Vagina (tissue), 2 donors: ENCODE measurements at regions of chr10 and their contacts with region 1.

Region 1: GRCh38 chr10:23994479-23995046 is 214.4 kb upstream of the KIAA1217 start:
- DNase-seq: no peak
- H3K4me3 ChIP-seq: no peak overlapping the region
- H3K27ac ChIP-seq: no peak overlapping the region
- H3K4me1 ChIP-seq: no peaks in the 10 kb centered on the region
- H3K27me3 ChIP-seq: no peaks in the 10 kb centered on the region
- CTCF ChIP-seq: peak; percentile 61 to 68 (median 65)
- POLR2A ChIP-seq: no peak

Region 2: DNA sequence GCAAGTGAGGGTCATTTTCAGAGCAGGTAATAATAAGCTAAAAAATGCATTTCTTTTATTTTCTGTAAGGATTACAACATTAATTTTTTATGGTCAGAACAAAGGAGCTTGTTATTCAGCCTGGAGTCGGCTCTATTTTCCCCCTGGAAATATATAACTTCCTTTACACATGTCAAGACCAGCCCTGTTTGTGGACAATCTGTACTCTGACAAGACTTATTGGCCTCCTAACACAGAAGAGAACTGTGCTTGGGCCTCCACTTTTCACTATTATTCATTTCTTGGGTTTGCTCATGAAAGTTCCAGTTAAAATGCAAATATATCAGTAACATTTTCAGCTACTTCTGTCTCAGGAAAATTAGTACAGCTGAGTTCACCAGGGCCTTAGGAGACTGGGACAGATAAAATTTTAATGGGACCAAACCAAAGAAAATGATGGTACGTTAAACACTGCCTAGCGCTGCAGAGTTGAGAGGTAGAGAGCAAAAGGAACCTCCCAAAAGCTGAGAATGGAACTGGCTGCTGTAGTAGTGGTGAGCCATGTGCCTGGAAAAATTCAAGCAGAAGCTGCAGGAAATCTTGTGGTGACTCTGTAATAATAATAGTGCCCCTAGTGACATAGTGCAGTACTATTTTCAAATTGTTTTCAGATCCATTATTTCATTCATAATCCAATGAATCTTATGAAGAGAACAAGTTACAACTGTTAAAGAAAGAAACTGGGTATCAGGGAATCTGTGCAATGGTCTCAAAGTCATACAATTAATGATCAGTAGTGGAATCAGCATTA is 12.8 kb before region 1 on chr10:
- intact Hi-C with region 1: no loop called
- DNase-seq: no peak
- H3K4me3 ChIP-seq: no peak overlapping the region
- H3K27ac ChIP-seq: no peak overlapping the region
- H3K4me1 ChIP-seq: no peaks in the 10 kb centered on the region
- H3K27me3 ChIP-seq: no peaks in the 10 kb centered on the region
- CTCF ChIP-seq: no peak
- POLR2A ChIP-seq: no peak

Region 3: GRCh38 chr10:24008164-24009091 is 13.9 kb after region 1 on chr10:
- intact Hi-C with region 1: no loop called
- DNase-seq: no peak
- H3K4me3 ChIP-seq: no peak overlapping the region
- H3K27ac ChIP-seq: no peak overlapping the region
- H3K4me1 ChIP-seq: no peaks in the 10 kb centered on the region
- H3K27me3 ChIP-seq: no peaks in the 10 kb centered on the region
- CTCF ChIP-seq: no peak
- POLR2A ChIP-seq: no peak

Region 4: DNA sequence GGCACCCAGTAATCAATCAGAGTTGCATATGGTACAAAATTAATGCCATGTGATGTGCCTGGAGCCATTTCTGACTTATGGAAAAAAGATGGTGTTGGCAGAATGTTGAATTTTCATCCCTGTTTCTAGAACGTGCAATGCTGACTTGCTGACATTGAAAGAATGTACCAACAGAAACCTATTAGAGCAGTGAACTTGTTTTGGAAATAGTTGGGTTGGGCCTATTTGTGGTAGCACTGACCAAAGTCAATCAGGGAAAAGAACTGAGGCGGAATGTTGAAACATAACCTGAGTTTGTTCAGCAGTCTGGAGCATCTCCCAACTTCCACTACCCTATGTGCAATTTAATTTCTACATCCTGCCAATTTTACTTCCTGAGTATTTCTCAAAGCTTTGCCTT is 202.7 kb after region 1 on chr10:
- intact Hi-C with region 1: loop called (anchors 10 kb)
- DNase-seq: no peak
- H3K4me3 ChIP-seq: no peak overlapping the region
- H3K27ac ChIP-seq: no peak overlapping the region
- H3K4me1 ChIP-seq: no peaks in the 10 kb centered on the region
- H3K27me3 ChIP-seq: no peaks in the 10 kb centered on the region
- CTCF ChIP-seq: no peak
- POLR2A ChIP-seq: no peak

Region 5: GRCh38 chr10:24519950-24520349 is 525.4 kb after region 1 on chr10:
- intact Hi-C with region 1: loop called (anchors 10 kb)
- DNase-seq: no peak
- H3K4me3 ChIP-seq: no peak overlapping the region
- H3K27ac ChIP-seq: no peak overlapping the region
- H3K4me1 ChIP-seq: no peaks in the 10 kb centered on the region
- H3K27me3 ChIP-seq: no peaks in the 10 kb centered on the region
- CTCF ChIP-seq: no peak
- POLR2A ChIP-seq: no peak